PC-3 (cell line): ENCODE measurements at regions of chr18 and their contacts with region 1.

Region 1: GRCh38 chr18:12271376-12272235 is 17.4 kb downstream of the CIDEA start:
- DNase-seq: peak; percentile 82
- ATAC-seq: peak; percentile 96
- H3K4me3 ChIP-seq: peak overlapping the region; percentile 87
- H3K27ac ChIP-seq: peak overlapping the region; percentile 33
- H3K4me1 ChIP-seq: no peaks in the 10 kb centered on the region
- H3K27me3 ChIP-seq: no peaks in the 10 kb centered on the region
- CTCF ChIP-seq: peak; percentile 74

Region 2: GRCh38 chr18:11752116-11752911 is 519.3 kb before region 1 on chr18:
- CTCF ChIA-PET with region 1: interaction called, 10 read pairs
- POLR2A ChIA-PET with region 1: no interaction called
- intact Hi-C with region 1: no loop called
- DNase-seq: peak; percentile 41
- ATAC-seq: peak; percentile 68
- H3K4me3 ChIP-seq: peak overlapping the region; percentile 41
- H3K27ac ChIP-seq: no peak overlapping the region
- H3K4me1 ChIP-seq: no peaks in the 10 kb centered on the region
- H3K27me3 ChIP-seq: peaks cover 75% of the 10 kb centered on the region
- CTCF ChIP-seq: no peak

Region 3: DNA sequence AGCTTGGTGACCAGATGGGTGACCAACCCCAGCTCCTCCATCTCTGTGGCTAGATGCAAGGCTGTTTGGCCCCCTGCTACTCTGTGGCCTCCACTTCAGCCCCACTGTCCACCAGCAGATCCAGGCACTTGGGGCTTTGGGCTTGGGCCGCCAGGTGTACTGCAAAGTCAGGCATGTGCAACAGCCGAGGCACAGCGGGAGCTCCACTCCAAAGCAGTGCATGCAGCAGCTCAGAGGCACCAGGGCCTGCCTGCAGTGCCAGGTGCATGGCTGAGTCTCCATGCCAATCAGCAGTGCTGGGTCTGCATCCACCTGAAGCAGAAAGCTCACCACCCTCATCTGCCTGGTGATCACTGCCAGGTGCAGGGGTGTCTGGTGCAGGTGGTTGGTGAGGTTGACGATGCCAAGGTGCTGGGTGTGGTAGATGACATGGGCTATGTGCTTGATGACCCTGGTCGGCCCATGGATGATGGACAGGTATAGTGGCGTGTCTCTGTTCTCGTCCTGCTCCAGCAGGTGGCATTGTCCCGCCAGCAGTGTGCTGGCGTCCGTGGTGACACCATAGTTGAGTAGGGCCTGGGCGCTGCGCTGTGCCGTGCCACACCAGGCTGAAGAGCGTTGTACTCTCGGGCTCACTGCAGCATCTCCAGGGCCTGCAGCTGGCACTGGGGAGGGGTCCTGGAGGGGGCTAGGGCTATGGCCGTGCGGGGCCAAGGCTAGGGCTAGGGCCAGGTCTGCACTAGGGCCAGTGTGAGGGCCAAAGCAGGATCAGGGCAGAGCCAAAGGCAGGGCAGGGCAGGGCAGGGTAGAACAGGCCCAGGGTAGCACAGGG is 179.0 kb before region 1 on chr18:
- CTCF ChIA-PET with region 1: interaction called, 7 read pairs
- POLR2A ChIA-PET with region 1: no interaction called
- intact Hi-C with region 1: loop called (anchors 1 kb)
- DNase-seq: peak; percentile 84
- ATAC-seq: peak; percentile 100
- H3K4me3 ChIP-seq: no peak overlapping the region
- H3K27ac ChIP-seq: no peak overlapping the region
- H3K4me1 ChIP-seq: peaks cover 6% of the 10 kb centered on the region
- H3K27me3 ChIP-seq: no peaks in the 10 kb centered on the region
- CTCF ChIP-seq: peak; percentile 89

Region 4: DNA sequence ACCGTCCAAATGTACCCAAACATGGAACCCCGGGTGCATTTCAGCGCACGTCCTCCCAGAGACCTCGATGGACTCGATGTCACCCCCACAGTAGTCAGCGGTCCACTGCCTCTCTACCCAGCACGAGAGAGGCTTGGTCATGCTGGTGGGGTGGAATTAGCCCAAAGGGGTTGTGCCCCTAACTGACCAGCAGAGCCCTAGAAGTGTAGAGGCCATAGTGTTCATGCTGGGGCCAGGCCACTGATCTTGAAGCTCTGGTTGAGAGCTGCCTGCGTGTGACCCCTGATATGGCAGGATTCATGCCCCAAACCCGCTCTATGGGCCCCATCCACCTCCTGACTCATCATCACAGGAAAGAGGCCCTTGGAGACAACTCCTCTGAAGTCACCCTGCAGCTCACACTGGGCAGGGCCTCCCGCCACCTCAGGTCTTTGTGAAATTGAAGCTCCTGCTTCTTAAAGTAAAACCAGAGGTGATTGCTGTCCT is 24.3 kb after region 1 on chr18:
- CTCF ChIA-PET with region 1: interaction called, 18 read pairs
- POLR2A ChIA-PET with region 1: interaction called, 3 read pairs
- intact Hi-C with region 1: no loop called
- DNase-seq: peak; percentile 52
- ATAC-seq: peak; percentile 75
- H3K4me3 ChIP-seq: no peak overlapping the region
- H3K27ac ChIP-seq: peak overlapping the region; percentile 51
- H3K4me1 ChIP-seq: peaks cover 14% of the 10 kb centered on the region
- H3K27me3 ChIP-seq: no peaks in the 10 kb centered on the region
- CTCF ChIP-seq: no peak

Region 5: DNA sequence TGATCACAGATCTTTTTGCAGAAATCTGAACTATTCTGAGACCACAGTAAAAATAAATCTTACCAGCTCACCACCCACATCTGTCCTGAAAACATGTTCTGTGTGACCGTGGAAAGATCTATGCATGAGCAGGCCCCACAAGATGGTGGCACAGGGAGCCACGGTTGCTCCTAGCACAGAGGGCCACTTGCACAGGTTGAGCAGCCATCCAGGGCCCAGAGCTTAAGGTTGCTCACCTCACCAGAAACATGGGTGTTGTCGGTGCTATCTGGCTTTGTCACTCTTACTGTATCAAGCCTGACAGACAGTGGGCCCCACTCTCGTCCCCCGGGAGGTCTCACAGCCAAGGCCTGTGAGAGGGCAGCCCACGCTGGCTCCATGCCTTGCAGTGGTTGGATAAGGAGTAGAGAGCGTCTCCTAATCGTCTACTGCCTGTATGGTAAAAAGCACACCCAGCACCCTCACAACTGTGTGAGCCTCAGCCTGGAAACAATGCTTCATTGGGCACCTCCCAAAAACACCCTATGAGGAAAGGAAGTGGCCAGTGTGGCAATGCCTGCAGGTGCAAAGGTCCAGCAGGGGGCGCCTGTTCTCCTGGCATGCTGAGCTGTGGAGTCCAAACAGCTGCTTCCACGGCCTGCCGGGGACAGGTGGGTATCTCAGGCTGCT is 56.0 kb after region 1 on chr18:
- CTCF ChIA-PET with region 1: interaction called, 11 read pairs
- POLR2A ChIA-PET with region 1: no interaction called
- intact Hi-C with region 1: no loop called
- DNase-seq: peak; percentile 86
- ATAC-seq: peak; percentile 98
- H3K4me3 ChIP-seq: no peak overlapping the region
- H3K27ac ChIP-seq: no peak overlapping the region
- H3K4me1 ChIP-seq: no peaks in the 10 kb centered on the region
- H3K27me3 ChIP-seq: no peaks in the 10 kb centered on the region
- CTCF ChIP-seq: peak; percentile 98